CD4-positive, alpha-beta T cell (primary cell): ENCODE measurements at regions of chr6 and their contacts with region 1.

Region 1: DNA sequence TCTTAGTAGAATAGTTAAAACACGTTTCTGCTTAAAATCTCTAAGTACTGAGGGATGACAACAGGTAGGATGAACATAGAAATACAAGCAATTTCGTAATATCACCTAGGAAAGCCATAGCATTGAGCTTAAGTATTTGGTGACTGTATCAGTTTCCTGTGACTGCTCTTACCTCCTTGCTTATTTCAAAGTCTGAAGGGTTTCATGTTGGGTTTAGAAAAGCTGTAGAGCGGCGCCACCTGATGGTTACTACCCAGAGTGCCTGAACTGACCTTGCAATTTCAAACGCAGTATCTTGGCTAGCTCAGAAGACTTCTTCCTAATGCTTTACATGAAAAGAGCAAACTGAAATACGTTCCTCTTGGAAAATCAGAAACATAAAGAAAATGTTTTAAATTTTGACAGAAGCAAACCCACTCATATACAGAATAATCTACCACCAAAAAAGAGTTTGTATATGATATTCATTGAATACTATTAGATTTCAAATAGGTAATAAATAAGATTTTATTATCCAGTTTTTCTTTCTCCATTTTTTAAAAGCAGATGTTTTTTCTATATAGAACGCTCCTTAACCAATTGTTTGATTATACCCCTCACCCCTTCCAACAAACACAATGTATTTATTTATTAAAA is 82.3 kb upstream of the RIPOR2 start:
- DNase-seq: peak; percentile 68 to 92 (median 79)
- ATAC-seq: peak; percentile 75
- H3K4me3 ChIP-seq: no peak overlapping the region
- H3K4me3 Mint-ChIP-seq: peak overlapping the region; percentile 46
- H3K27ac ChIP-seq: peak overlapping the region; percentile 44 to 50
- H3K27ac Mint-ChIP-seq: peak overlapping the region; percentile 89
- H3K4me1 ChIP-seq: peaks cover 35% of the 10 kb centered on the region
- H3K4me1 Mint-ChIP-seq: peaks cover 44% of the 10 kb centered on the region
- H3K27me3 ChIP-seq: no peaks in the 10 kb centered on the region
- H3K27me3 Mint-ChIP-seq: no peaks in the 10 kb centered on the region
- CTCF ChIP-seq: peak; percentile 87

Region 2: GRCh38 chr6:24709014-24709711 is 308.9 kb before region 1 on chr6:
- CTCF ChIA-PET with region 1: no interaction called
- POLR2A ChIA-PET with region 1: no interaction called
- intact Hi-C with region 1: loop called in 1 of 2 experiments (anchors 5 kb)
- DNase-seq: no peak
- ATAC-seq: no peak
- H3K4me3 ChIP-seq: no peak overlapping the region
- H3K4me3 Mint-ChIP-seq: no peak overlapping the region
- H3K27ac ChIP-seq: no peak overlapping the region
- H3K27ac Mint-ChIP-seq: peak overlapping the region; percentile 30
- H3K4me1 ChIP-seq: peaks cover 17% of the 10 kb centered on the region
- H3K4me1 Mint-ChIP-seq: peaks cover 75% of the 10 kb centered on the region
- H3K27me3 ChIP-seq: no peaks in the 10 kb centered on the region
- H3K27me3 Mint-ChIP-seq: no peaks in the 10 kb centered on the region
- CTCF ChIP-seq: no peak

Region 3: DNA sequence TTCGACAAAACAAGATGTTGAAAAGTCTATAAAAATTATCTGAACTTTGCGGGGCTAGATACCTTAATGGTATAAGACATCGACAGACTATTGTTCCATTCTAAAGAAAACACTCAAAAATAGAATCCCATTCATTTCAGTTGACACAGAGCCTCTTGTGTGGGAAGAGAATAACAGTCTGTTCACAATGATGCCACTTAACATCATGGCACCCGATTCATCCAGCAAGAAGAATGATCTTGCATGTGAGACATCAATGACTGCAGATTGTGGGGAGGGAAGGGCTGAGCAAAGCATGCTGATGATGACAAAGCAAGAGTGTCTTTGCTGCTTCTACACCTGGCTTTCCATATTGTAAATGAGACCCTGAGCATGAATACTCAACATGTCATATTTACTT is 169.6 kb before region 1 on chr6:
- CTCF ChIA-PET with region 1: interaction called, 15 read pairs
- POLR2A ChIA-PET with region 1: interaction called, 6 read pairs
- intact Hi-C with region 1: no loop called
- DNase-seq: no peak
- ATAC-seq: no peak
- H3K4me3 ChIP-seq: no peak overlapping the region
- H3K4me3 Mint-ChIP-seq: no peak overlapping the region
- H3K27ac ChIP-seq: no peak overlapping the region
- H3K27ac Mint-ChIP-seq: peak overlapping the region; percentile 87
- H3K4me1 ChIP-seq: peaks cover 26% of the 10 kb centered on the region
- H3K4me1 Mint-ChIP-seq: peaks cover 60% of the 10 kb centered on the region
- H3K27me3 ChIP-seq: no peaks in the 10 kb centered on the region
- H3K27me3 Mint-ChIP-seq: no peaks in the 10 kb centered on the region
- CTCF ChIP-seq: no peak

Region 4: GRCh38 chr6:24902782-24903181 is 115.3 kb before region 1 on chr6:
- CTCF ChIA-PET with region 1: interaction called, 13 read pairs
- POLR2A ChIA-PET with region 1: interaction called, 26 read pairs
- intact Hi-C with region 1: no loop called
- DNase-seq: no peak
- ATAC-seq: no peak
- H3K4me3 ChIP-seq: no peak overlapping the region
- H3K4me3 Mint-ChIP-seq: peak overlapping the region; percentile 36
- H3K27ac ChIP-seq: peak overlapping the region; percentile 31 to 39
- H3K27ac Mint-ChIP-seq: peak overlapping the region; percentile 97
- H3K4me1 ChIP-seq: peaks cover 70% of the 10 kb centered on the region
- H3K4me1 Mint-ChIP-seq: peaks cover 99% of the 10 kb centered on the region
- H3K27me3 ChIP-seq: no peaks in the 10 kb centered on the region
- H3K27me3 Mint-ChIP-seq: no peaks in the 10 kb centered on the region
- CTCF ChIP-seq: no peak

Region 5: DNA sequence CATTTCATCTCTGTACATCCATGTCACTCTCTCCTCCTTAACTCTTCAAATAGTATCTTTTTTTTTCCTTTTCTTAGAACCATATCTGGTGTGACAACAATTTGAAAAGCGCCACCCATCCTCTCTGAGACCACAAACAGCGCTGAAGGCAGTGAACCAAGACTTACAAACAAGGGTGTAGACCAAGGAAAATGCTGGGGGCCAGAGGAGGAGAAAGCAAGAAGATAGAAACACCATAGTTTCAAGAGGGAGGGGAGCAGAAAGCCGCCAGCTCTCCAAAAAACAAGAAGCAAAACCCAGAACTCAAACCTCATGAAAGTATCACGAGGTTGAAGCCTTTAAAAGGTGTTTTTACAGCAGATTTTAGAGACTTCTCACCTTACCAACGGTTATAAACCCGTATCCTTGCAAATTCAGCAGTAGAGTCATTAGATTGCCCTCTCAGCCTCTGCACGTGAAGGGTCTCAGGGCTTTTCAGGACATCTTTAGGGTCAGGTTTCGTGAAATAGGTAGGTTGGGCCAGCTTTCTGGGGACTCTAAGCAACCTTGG is 69.0 kb before region 1 on chr6:
- CTCF ChIA-PET with region 1: interaction called, 5 read pairs
- POLR2A ChIA-PET with region 1: interaction called, 15 read pairs
- intact Hi-C with region 1: no loop called
- DNase-seq: peak in 12 of 14 experiments; percentile 38 to 89 (median 58)
- ATAC-seq: peak; percentile 45
- H3K4me3 ChIP-seq: peak overlapping the region; percentile 5
- H3K4me3 Mint-ChIP-seq: peak overlapping the region; percentile 50
- H3K27ac ChIP-seq: peak overlapping the region; percentile 56 to 70
- H3K27ac Mint-ChIP-seq: peak overlapping the region; percentile 91
- H3K4me1 ChIP-seq: peaks cover 62% of the 10 kb centered on the region
- H3K4me1 Mint-ChIP-seq: peaks cover 87% of the 10 kb centered on the region
- H3K27me3 ChIP-seq: no peaks in the 10 kb centered on the region
- H3K27me3 Mint-ChIP-seq: no peaks in the 10 kb centered on the region
- CTCF ChIP-seq: no peak

Region 6: GRCh38 chr6:25070547-25071366 is 52.7 kb after region 1 on chr6:
- CTCF ChIA-PET with region 1: interaction called, 24 read pairs
- POLR2A ChIA-PET with region 1: interaction called, 7 read pairs
- intact Hi-C with region 1: loop called in 1 of 2 experiments (anchors 2 kb)
- DNase-seq: peak; percentile 71 to 93 (median 76)
- ATAC-seq: peak; percentile 99
- H3K4me3 ChIP-seq: no peak overlapping the region
- H3K4me3 Mint-ChIP-seq: peak overlapping the region; percentile 14
- H3K27ac ChIP-seq: no peak overlapping the region
- H3K27ac Mint-ChIP-seq: peak overlapping the region; percentile 75
- H3K4me1 ChIP-seq: peaks cover 4% of the 10 kb centered on the region
- H3K4me1 Mint-ChIP-seq: peaks cover 10% of the 10 kb centered on the region
- H3K27me3 ChIP-seq: no peaks in the 10 kb centered on the region
- H3K27me3 Mint-ChIP-seq: no peaks in the 10 kb centered on the region
- CTCF ChIP-seq: peak; percentile 98